ENCODE measurements at regions of chr2 and their contacts with region 1.

Region 1: DNA sequence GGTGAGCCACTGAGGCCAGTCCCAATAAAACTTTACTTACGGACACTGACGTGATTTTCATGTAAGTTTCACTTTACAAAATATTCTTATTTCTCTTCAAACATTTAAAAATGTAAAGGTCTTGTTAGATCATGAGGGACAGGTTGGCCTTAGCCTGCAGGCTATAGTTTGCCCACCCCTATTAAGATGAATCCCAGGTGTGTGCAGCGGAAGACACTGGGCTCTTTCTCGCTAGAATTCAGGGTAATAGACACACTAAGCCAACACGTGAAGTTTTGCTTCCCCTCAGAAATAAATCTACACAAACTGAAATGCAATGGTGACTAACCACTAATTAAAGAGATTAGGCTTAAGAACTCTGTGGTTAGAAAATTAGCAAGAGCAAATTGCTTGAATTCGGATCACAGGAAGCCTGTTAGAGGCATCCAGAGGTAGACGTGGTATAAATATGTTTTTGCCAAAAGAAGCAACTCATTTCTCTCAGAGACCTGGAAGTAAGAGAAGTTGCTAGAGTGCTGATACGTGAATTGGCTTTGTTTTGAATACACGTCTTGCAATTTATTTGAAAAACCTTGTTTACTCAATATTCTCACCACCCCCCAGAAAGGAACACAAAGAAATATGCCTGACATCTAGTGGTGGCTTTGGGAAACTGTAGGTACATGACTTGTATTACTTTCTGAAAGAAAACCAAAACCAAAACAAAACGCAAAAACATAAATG is 151.6 kb downstream of the DTNB start:
- DNase-seq: peak in 1 of 10 donors; percentile 29
- H3K4me3 ChIP-seq: peak overlapping the region in 54 of 59 donors; percentile 2 to 63 (median 38)
- H3K27ac ChIP-seq: peak overlapping the region in 46 of 59 donors; percentile 3 to 82 (median 55)
- H3K27me3 ChIP-seq: no peaks in the 10 kb centered on the region
- CTCF ChIP-seq: peak; percentile 73 to 94 (median 87)

Region 2: GRCh38 chr2:25362049-25362433 is 159.8 kb before region 1 on chr2:
- intact Hi-C with region 1: loop called in 1 of 2 experiments (anchors 5 kb)
- DNase-seq: peak; percentile 86 to 93 (median 90)
- H3K4me3 ChIP-seq: peak overlapping the region; percentile 35 to 74 (median 55)
- H3K27ac ChIP-seq: peak overlapping the region in 46 of 59 donors; percentile 4 to 80 (median 52)
- H3K27me3 ChIP-seq: no peaks in the 10 kb centered on the region
- CTCF ChIP-seq: peak; percentile 93 to 99 (median 98)

Region 3: DNA sequence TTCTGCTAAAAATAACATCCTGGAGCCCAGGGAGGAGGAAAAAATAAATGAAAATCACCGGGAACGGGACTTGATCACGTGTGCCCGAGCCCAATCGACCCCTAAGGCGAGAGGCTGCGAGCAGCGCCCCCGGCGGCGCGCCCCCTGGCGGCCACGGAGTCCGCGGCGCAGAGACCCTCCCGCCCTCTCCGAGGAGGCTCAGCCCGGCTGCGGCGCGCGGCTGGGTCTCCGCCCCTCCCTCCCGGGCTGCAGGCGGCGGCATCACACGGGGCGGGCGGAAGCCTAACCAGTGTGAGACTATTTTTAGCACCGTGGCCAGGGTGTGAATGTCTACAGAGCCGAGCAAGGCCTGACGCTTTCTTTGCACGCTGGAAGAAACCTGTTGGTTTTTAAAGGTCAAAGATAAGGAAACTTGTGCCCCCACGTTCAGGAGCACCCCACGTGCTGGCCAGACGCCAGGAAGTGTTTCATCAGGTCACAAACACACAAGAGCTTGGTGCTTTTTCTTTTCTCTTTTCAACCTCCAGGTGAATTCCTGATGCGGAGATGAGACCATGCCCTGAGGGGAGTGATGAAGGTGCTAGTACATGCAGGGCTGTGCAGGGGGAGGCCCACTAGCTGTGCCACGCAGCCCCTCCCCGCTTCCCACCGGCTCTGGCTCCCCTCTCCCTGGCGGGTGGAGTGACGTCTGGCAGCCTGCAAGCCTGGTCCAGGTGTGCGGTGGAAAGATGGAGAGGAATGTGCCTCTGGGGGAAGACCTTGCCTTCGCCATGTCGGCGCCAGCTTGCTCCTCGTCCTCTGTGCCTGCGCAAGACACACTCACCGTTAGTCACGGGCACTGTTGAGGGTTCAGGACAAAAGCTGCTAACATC is 144.8 kb before region 1 on chr2:
- intact Hi-C with region 1: loop called (anchors 5 to 10 kb)
- DNase-seq: peak; percentile 70 to 87 (median 78)
- H3K4me3 ChIP-seq: peak overlapping the region in 58 of 59 donors; percentile 15 to 64 (median 46)
- H3K27ac ChIP-seq: peak overlapping the region; percentile 0 to 89 (median 74)
- H3K27me3 ChIP-seq: no peaks in the 10 kb centered on the region
- CTCF ChIP-seq: peak; percentile 75 to 99 (median 96)

Region 4: GRCh38 chr2:25497918-25498407 is 23.9 kb before region 1 on chr2:
- intact Hi-C with region 1: no loop called
- DNase-seq: no peak
- H3K4me3 ChIP-seq: peak overlapping the region in 3 of 59 donors; percentile 6 to 24 (median 20)
- H3K27ac ChIP-seq: peak overlapping the region in 58 of 59 donors; percentile 1 to 93 (median 82)
- H3K27me3 ChIP-seq: no peaks in the 10 kb centered on the region
- CTCF ChIP-seq: no peak

Region 5: GRCh38 chr2:25567406-25567805 is 45.6 kb after region 1 on chr2:
- intact Hi-C with region 1: loop called in 1 of 2 experiments (anchors 5 kb)
- DNase-seq: no peak
- H3K4me3 ChIP-seq: no peak overlapping the region
- H3K27ac ChIP-seq: peak overlapping the region in 28 of 59 donors; percentile 4 to 64 (median 45)
- H3K27me3 ChIP-seq: no peaks in the 10 kb centered on the region
- CTCF ChIP-seq: peak; percentile 25 to 76 (median 58)

Region 6: GRCh38 chr2:25586726-25587144 is 64.9 kb after region 1 on chr2:
- intact Hi-C with region 1: loop called in 1 of 2 experiments (anchors 10 kb)
- DNase-seq: peak in 5 of 10 donors; percentile 34 to 58 (median 42)
- H3K4me3 ChIP-seq: peak overlapping the region in 2 of 59 donors; percentile 7 to 8
- H3K27ac ChIP-seq: peak overlapping the region; percentile 56 to 98 (median 90)
- H3K27me3 ChIP-seq: no peaks in the 10 kb centered on the region
- CTCF ChIP-seq: no peak

Measured in dorsolateral prefrontal cortex (tissue), 120 donors.